Aorta (tissue), 5 donors: ENCODE measurements at regions of chr16 and their contacts with region 1.

Region 1: DNA sequence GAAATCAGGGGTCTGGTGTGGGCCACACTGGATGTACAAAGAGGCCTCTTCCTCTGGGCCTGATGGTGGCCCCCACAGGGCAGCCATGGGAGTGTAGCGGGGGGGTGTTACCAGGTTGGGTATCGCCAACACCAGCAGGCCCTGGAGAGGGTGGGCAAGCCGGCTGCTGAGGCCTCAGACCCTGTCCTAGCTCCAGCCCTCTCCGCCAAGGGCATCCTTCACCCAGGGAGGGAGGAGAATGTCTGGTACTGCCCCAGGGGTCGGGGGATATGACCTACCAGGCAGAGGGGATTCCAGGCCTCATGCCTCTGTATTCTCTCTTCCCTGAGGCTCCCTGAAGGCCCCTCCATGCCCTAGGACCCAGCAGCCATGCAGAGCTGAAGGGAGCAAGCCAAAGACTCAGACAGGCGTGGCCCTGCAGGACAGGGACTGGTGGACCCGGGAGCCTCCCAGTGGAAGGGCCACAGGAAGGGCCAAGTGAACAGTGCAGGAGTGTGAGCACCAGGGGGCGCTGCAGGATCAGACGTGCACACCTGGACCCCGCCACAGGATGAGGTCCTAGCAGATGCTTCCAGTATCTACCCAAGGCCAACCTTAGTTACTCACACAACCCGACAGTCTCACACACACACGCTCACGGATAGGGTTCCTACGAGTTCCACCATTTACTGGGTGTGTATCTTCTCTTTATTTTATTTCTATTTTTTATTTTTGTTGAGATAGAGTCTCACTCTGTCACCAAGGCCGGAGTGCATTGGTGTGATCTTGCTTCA is 10.9 kb upstream of the CES4A start:
- DNase-seq: peak; percentile 92 to 97
- ATAC-seq: peak; percentile 94
- H3K4me3 ChIP-seq: no peak overlapping the region
- H3K27ac ChIP-seq: no peak overlapping the region
- H3K4me1 ChIP-seq: no peaks in the 10 kb centered on the region
- H3K27me3 ChIP-seq: no peaks in the 10 kb centered on the region

Region 2: GRCh38 chr16:65876056-65876408 is 1101.5 kb before region 1 on chr16:
- intact Hi-C with region 1: no loop called
- DNase-seq: no peak
- ATAC-seq: no peak
- H3K4me3 ChIP-seq: no peak overlapping the region
- H3K27ac ChIP-seq: no peak overlapping the region
- H3K4me1 ChIP-seq: no peaks in the 10 kb centered on the region
- H3K27me3 ChIP-seq: no peaks in the 10 kb centered on the region

Region 3: GRCh38 chr16:67104061-67104460 is 126.5 kb after region 1 on chr16:
- intact Hi-C with region 1: no loop called
- DNase-seq: no peak
- ATAC-seq: peak; percentile 42
- H3K4me3 ChIP-seq: no peak overlapping the region
- H3K27ac ChIP-seq: no peak overlapping the region
- H3K4me1 ChIP-seq: no peaks in the 10 kb centered on the region
- H3K27me3 ChIP-seq: no peaks in the 10 kb centered on the region

Region 4: DNA sequence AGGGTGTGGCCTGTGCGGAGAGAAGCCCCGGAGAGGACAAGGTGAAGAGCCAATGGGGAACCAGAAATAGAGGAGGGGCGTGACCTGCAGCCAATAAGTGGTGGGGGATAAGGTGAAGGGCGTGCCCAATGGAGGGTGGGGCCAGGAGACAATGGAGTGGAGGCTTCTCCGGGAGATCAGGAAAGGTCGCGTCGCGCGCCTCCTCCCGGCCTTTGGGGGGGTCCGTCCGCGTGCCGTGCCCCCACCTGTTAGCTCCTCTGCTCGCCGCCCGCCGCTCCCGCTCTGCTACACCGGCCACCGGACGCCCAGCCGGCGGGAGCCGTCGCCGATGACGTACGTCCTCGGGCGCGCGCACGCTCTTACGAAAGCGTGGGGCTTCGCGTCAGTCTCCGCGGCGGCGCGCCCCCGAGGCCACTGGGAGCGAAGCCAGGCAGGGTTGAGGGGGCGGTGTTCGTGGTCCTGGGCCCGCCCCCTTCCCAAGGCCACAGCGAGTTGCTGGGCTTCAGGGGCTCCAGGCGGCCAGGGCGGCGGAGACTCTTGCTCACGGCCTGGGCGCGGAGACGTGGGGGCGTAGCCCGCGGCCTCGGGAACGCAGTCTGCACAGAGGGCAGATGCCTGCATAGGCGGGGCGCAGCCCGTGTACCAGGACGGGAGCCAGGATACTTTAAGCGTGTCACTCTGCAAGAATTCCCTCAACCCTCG is 206.3 kb after region 1 on chr16 and contains the start of gene MATCAP1:
- intact Hi-C with region 1: loop called (anchors 1 to 10 kb)
- DNase-seq: peak; percentile 97
- ATAC-seq: peak; percentile 94
- H3K4me3 ChIP-seq: peak within 1 kb of the TSS; percentile 24 to 54
- H3K27ac ChIP-seq: peak within 1 kb of the TSS in 1 of 2 donors; percentile 81
- H3K4me1 ChIP-seq: no peaks in the 10 kb centered on the region
- H3K27me3 ChIP-seq: no peaks in the 10 kb centered on the region
- total RNA-seq, gene MATCAP1: 18.1 to 33.8 TPM